ENCODE measurements at regions of chr14 and their contacts with region 1.

Region 1: DNA sequence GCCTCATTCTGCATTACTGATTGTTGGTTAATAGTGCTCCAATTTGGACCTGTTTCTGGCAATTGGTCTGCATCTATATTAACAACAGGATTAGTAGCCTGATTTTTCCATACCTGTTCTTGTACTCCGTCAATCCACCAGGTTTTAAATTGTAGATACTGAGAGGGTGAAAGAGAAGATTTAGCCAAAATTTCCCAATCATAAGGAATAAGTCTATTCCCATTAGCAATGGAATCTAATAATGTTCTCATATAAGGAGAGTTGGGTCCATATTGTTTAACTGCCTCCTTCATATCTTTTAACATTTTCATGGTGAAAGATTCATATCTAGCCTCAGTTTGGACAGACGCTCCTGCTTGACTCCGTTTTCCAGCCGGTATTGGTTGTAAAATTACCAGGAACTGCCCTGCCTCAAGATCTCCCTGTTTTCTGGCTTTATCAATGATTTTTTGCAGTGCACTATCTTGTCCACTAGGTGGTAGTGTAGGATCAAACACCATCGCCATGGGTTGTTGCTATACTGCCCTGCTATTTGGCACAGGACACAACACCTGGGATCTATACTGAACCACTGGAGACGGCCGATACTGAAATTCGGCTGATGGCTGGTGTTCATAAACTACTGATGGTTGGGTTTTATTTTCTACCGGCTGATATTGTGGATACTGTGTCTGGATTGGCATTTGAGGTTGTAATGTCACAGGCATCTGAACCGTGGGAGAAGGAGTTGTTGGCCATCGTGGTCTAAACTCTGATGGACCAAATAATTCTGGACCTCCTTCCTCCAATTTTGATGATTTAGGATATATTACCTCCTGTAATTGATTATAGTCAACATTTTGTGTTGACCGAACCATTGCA is 25.2 kb downstream of the DHRS4L2 start:
- DNase-seq: peak; percentile 51
- H3K4me3 Mint-ChIP-seq: no peak overlapping the region
- H3K27ac Mint-ChIP-seq: no peak overlapping the region
- H3K4me1 Mint-ChIP-seq: peaks cover 21% of the 10 kb centered on the region
- H3K27me3 Mint-ChIP-seq: peaks cover 12% of the 10 kb centered on the region

Region 2: GRCh38 chr14:23953464-23954278 is 60.2 kb before region 1 on chr14 and contains the start of gene DHRS4:
- intact Hi-C with region 1: loop called (anchors 10 kb)
- DNase-seq: peak; percentile 74
- H3K4me3 Mint-ChIP-seq: peak within 1 kb of the TSS; percentile 94
- H3K27ac Mint-ChIP-seq: peak within 1 kb of the TSS; percentile 78
- H3K4me1 Mint-ChIP-seq: peaks cover 16% of the 10 kb centered on the region
- H3K27me3 Mint-ChIP-seq: no peaks in the 10 kb centered on the region
- total RNA-seq, gene DHRS4: 17.8 and 22.5 TPM in 2 replicates

Region 3: DNA sequence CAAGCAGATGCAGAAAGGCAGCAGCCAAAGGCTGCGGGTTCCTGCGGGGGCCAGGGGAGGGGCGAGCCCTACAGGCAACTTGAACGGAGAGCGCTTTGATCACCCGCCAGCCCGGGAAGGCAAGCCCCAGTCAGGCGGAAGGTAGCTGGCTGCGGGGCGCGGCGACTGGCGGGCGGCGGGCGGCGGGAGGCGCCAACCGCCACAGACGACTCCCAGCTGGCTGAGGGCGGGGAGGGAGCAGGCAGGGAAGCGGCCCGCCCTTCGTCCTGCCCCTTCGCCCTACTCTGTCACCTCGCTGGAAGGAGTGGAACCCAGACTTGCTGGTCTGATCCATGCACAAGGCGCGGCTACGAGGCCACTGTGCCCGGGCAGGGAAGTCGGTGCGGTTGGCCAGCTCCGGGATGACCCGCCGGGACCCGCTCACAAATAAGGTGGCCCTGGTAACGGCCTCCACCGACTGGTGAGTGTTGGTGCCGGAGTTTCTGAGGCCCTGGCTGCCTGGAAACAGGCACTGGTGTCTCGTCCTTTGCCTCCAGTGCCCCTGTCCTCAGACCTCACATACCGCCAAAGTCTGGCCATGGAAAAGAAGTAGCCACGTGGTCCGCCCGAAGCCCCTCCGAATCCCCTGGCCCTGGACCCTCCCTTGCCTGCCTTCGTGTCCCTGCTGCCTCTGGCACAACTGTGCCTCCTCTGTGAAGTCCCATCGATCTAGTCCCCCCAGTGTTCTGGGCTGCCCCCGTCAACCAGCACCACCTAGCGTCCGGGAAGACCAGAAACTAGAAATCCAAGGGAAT is 22.5 kb after region 1 on chr14:
- intact Hi-C with region 1: loop called (anchors 1 kb)
- DNase-seq: peak; percentile 65
- H3K4me3 Mint-ChIP-seq: peak overlapping the region; percentile 94
- H3K27ac Mint-ChIP-seq: peak overlapping the region; percentile 88
- H3K4me1 Mint-ChIP-seq: peaks cover 10% of the 10 kb centered on the region
- H3K27me3 Mint-ChIP-seq: no peaks in the 10 kb centered on the region

Region 4: GRCh38 chr14:24093901-24094761 is 80.2 kb after region 1 on chr14 and contains the start of gene PCK2:
- intact Hi-C with region 1: loop called (anchors 1 kb)
- DNase-seq: peak; percentile 68
- H3K4me3 Mint-ChIP-seq: peak within 1 kb of the TSS; percentile 97
- H3K27ac Mint-ChIP-seq: peak within 1 kb of the TSS; percentile 98
- H3K4me1 Mint-ChIP-seq: peaks cover 31% of the 10 kb centered on the region
- H3K27me3 Mint-ChIP-seq: no peaks in the 10 kb centered on the region
- total RNA-seq, gene PCK2: 62.7 and 62.8 TPM in 2 replicates

Region 5: DNA sequence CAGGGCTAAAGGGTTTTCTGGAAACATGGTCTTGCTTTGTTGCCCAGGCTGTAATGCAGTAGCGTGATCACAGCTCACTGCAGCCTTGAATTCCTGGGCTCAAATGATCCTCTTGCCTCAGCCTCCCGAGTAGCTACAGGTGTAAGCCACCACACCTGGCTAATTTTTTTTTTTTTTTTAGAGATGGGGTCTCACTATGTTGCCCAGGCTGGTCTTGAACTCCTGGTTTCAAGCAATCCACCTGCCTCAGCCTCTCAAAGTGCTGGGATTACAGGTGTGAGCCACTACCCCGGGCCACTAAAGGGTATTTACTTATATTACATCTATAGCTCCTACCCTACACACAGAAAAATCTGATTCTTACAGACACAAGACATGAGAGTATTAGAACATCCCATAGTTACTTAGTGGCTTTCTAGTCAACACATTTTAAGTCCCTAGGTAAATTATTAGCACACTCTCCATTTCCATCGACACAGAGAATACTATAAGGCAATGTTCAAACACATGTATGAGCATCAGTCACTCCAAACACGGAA is 94.5 kb after region 1 on chr14:
- intact Hi-C with region 1: loop called (anchors 1 kb)
- DNase-seq: no peak
- H3K4me3 Mint-ChIP-seq: no peak overlapping the region
- H3K27ac Mint-ChIP-seq: peak overlapping the region; percentile 93
- H3K4me1 Mint-ChIP-seq: peaks cover 18% of the 10 kb centered on the region
- H3K27me3 Mint-ChIP-seq: no peaks in the 10 kb centered on the region

Region 6: GRCh38 chr14:24160850-24161804 is 147.2 kb after region 1 on chr14 and contains the start of gene IRF9:
- intact Hi-C with region 1: loop called (anchors 2 kb)
- DNase-seq: peak; percentile 97
- H3K4me3 Mint-ChIP-seq: peak within 1 kb of the TSS; percentile 95
- H3K27ac Mint-ChIP-seq: peak within 1 kb of the TSS; percentile 97
- H3K4me1 Mint-ChIP-seq: peaks cover 38% of the 10 kb centered on the region
- H3K27me3 Mint-ChIP-seq: no peaks in the 10 kb centered on the region
- total RNA-seq, gene IRF9: 124 and 129 TPM in 2 replicates

Region 7: DNA sequence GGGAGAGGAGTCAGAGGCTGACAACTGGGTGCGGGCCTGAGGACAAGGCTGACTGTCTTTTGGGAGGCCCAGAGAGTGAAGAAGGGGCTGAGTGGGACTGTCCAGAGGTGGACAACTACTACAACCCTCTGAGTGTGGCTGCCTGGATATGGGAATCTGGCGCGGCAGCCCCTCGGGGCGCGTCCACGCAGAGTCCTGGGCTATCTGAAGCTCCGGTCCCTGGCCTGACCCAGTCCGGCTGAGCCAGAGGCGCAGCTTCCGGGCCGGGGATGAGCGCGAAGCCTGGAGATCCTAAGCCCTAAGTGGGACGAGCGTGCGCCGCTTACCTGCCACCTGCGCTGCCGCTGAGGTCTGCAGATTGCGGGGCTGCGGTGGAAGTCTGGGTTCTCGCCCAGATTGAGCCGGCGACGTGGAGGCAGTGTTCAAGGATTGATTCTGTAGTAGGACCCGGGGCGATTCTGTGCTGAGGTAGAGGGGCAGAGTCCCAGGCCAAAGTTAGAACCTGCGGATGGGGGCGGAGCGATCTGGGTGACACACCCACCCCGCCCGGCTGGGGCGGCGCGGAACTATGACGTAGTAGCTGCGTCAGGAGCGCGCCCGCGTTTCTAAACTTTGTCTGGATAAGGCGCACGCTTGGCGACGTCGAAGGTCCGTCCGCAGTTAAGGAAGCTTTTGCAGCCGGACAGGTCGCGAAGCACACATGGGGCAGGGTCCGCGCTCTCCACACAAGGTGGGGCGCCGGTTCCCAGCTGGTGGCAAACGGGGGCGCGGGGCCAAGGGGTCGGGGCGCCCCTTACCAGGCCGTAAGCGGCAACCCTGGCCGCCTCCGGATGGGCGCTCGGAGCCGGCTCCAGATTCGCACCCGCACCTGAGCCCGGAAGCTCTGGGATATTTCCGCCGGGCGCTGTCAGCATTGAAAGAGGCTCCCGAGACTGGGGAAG is 285.6 kb after region 1 on chr14 and contains the starts of genes DHRS1 and NOP9:
- intact Hi-C with region 1: loop called (anchors 5 kb)
- DNase-seq: peak; percentile 89
- H3K4me3 Mint-ChIP-seq: peak within 1 kb of the TSS; percentile 90
- H3K27ac Mint-ChIP-seq: peak within 1 kb of the TSS; percentile 88
- H3K4me1 Mint-ChIP-seq: peaks cover 33% of the 10 kb centered on the region
- H3K27me3 Mint-ChIP-seq: no peaks in the 10 kb centered on the region
- total RNA-seq, gene DHRS1: 9.7 and 10.4 TPM in 2 replicates
- total RNA-seq, gene NOP9: 39.7 and 42.0 TPM in 2 replicates